CD4-positive, alpha-beta memory T cell (primary cell): ENCODE measurements at regions of chr11 and their contacts with region 1.

Region 1: DNA sequence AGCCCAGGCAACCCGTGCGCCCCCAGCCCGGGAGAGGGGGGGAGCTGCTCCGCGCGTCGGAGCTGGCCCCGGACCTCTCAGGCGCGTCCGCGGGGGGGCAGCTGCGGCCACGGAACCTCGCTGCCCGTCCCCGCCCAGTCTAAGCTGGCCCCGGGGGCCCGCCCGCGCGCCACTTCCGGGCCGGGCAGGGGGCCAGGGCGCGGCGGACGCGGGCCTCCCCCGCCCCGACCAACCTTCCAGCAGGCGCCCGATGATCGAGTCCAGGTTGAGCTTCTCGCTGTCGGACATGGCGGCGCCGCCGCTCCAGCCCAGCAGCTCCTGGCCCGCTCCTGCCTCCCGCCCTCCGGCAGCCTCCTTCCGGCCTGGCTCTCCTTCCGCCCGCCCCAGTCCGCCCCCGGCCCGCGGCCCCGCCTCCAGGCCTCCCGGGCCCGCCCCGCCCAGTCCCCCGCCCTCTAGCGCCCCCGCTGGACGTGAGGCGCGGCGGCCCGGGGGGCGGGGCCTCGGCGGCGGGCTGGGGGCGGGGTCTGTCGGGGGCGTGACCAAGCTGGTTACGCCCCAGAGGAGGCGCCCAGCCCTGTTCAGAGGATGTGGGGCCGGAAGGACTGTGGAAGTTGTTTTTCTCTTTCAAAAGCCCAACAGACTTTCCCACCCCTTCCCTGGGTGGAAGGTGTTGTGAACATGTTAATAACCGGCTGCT is at the start of gene PPP1CA:
- DNase-seq: peak; percentile 87 to 97 (median 92)
- H3K4me3 ChIP-seq: peak within 1 kb of the TSS; percentile 78 to 88
- H3K4me3 Mint-ChIP-seq: peak within 1 kb of the TSS; percentile 89 to 97 (median 92)
- H3K27ac ChIP-seq: peak within 1 kb of the TSS; percentile 81
- H3K27ac Mint-ChIP-seq: peak within 1 kb of the TSS; percentile 83 to 98 (median 89)
- H3K4me1 ChIP-seq: peaks cover 78% of the 10 kb centered on the region
- H3K4me1 Mint-ChIP-seq: peaks cover 27 to 80% (median 45%) of the 10 kb centered on the region in 4 donors
- H3K27me3 ChIP-seq: no peaks in the 10 kb centered on the region
- H3K27me3 Mint-ChIP-seq: no peaks in the 10 kb centered on the region
- total RNA-seq, gene PPP1CA: 159 to 161 TPM

Region 2: DNA sequence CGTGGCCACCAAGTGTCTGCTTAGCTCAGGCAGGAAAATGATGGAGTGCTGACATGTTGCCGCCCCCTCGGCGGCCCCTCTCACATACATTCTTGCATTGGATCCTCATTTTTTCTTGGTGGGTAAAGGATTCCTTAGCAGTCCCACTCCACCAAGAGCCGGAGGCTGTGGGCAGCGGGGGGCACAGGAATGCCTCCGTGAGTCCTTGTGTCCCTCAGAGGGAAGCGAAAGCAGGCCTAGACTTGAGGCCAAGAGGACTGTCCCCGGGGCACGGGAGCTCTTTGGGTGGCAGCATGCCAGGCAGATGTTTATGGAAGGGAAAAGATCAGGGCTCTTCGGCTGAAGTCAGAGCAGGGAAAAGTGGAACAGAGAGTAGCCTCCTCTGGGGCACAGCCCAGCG is 523.2 kb before region 1 on chr11:
- CTCF ChIA-PET with region 1: no interaction called
- POLR2A ChIA-PET with region 1: no interaction called
- intact Hi-C with region 1: no loop called
- DNase-seq: no peak
- H3K4me3 ChIP-seq: no peak overlapping the region
- H3K4me3 Mint-ChIP-seq: no peak overlapping the region
- H3K27ac ChIP-seq: no peak overlapping the region
- H3K27ac Mint-ChIP-seq: no peak overlapping the region
- H3K4me1 ChIP-seq: peaks cover 14% of the 10 kb centered on the region
- H3K4me1 Mint-ChIP-seq: peaks cover 10 to 25% (median 13%) of the 10 kb centered on the region in 4 donors
- H3K27me3 ChIP-seq: no peaks in the 10 kb centered on the region
- H3K27me3 Mint-ChIP-seq: no peaks in the 10 kb centered on the region

Region 3: GRCh38 chr11:67265633-67266423 is 135.8 kb before region 1 on chr11:
- CTCF ChIA-PET with region 1: no interaction called
- POLR2A ChIA-PET with region 1: interaction called, 30 read pairs
- intact Hi-C with region 1: no loop called
- DNase-seq: peak; percentile 61 to 85 (median 77)
- H3K4me3 ChIP-seq: peak overlapping the region in 1 of 2 donors; percentile 23
- H3K4me3 Mint-ChIP-seq: peak overlapping the region; percentile 77 to 86 (median 80)
- H3K27ac ChIP-seq: peak overlapping the region; percentile 63
- H3K27ac Mint-ChIP-seq: peak overlapping the region; percentile 79 to 94 (median 87)
- H3K4me1 ChIP-seq: peaks cover 61% of the 10 kb centered on the region
- H3K4me1 Mint-ChIP-seq: peaks cover 34 to 82% (median 50%) of the 10 kb centered on the region in 4 donors
- H3K27me3 ChIP-seq: no peaks in the 10 kb centered on the region
- H3K27me3 Mint-ChIP-seq: peaks cover 0 to 5% of the 10 kb centered on the region in 2 donors

Region 4: GRCh38 chr11:67288452-67289225 is 113.0 kb before region 1 on chr11:
- CTCF ChIA-PET with region 1: no interaction called
- POLR2A ChIA-PET with region 1: interaction called, 12 read pairs
- intact Hi-C with region 1: no loop called
- DNase-seq: peak; percentile 89 to 94 (median 91)
- H3K4me3 ChIP-seq: peak overlapping the region; percentile 58 to 62
- H3K4me3 Mint-ChIP-seq: peak overlapping the region; percentile 79 to 90 (median 86)
- H3K27ac ChIP-seq: peak overlapping the region; percentile 88
- H3K27ac Mint-ChIP-seq: peak overlapping the region; percentile 95 to 100 (median 98)
- H3K4me1 ChIP-seq: peaks cover 77% of the 10 kb centered on the region
- H3K4me1 Mint-ChIP-seq: peaks cover 32 to 81% (median 46%) of the 10 kb centered on the region in 4 donors
- H3K27me3 ChIP-seq: no peaks in the 10 kb centered on the region
- H3K27me3 Mint-ChIP-seq: no peaks in the 10 kb centered on the region

Region 5: DNA sequence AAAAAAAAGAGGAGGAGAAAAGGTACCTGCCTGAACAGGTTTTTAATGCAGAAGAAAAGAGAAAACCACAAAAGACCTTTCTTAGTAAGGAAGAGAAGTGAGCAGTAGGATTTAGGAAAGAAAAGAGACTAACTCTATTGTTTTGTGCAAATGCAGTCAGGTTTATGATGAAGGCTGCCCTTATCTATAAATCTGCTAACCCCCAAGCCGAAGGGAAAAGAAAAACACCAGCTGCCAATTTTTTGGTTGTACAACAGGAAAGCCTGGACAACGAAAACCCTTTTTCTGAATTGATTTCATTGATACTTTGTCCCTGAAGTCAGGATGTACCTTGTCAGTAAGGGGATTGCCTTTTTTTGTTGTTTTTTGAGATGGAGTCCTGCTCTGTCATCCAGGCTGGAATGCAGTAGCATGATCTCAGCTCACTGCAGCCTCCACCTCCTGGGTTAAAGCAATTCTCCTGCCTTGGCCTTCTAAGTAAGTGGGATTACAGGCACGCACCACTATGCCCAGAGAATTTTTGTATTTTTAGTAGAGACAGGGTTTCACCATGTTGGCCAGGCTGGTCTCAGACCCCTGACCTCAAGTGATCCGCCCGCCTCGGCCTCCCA is 69.5 kb before region 1 on chr11:
- CTCF ChIA-PET with region 1: no interaction called
- POLR2A ChIA-PET with region 1: no interaction called
- intact Hi-C with region 1: no loop called
- DNase-seq: no peak
- H3K4me3 ChIP-seq: no peak overlapping the region
- H3K4me3 Mint-ChIP-seq: no peak overlapping the region
- H3K27ac ChIP-seq: no peak overlapping the region
- H3K27ac Mint-ChIP-seq: no peak overlapping the region
- H3K4me1 ChIP-seq: no peaks in the 10 kb centered on the region
- H3K4me1 Mint-ChIP-seq: no peaks in the 10 kb centered on the region
- H3K27me3 ChIP-seq: no peaks in the 10 kb centered on the region
- H3K27me3 Mint-ChIP-seq: no peaks in the 10 kb centered on the region

Region 6: DNA sequence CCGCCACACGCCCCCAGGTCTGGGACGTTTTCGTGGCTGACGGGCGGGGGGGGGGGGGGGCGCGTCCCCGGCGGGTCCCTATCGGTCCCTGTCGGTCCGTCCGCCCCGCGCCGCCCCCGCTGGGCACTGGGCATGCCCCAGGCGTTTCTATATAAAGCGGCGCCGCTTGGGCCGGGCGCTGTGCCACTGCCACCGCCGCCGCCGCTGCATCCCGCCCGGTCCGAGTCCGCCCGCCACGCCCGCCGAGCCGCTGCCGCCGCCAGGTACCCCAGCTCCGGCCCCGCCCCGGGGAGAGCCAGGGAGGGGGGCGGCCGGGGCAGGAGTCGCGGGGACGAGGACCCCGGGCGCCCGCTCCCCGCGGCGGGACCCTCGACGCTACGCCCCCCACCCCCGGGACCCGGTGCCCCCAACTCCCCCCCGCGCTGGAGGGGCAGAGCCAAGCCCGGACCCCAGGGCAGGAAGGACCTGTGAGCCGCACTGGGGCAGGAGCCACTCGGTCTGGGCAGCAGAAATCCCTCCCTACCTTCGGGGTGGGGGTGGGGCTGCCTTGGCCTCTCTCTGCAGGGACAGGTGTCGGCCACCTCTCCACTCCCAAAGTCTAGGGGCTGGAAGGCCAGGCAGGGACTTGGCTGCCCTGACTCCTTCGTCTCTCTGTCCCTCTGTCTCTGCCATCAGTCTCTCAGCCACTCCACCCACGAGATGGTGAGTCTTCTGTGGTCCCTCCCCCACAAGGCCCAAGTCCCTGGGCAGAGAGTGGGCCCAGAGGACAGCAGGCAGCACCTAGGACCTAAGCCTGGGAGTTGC is 14.1 kb after region 1 on chr11 and contains the start of gene CARNS1:
- CTCF ChIA-PET with region 1: interaction called, 63 read pairs
- POLR2A ChIA-PET with region 1: interaction called, 2,262 read pairs
- intact Hi-C with region 1: loop called (anchors 1 kb)
- DNase-seq: no peak
- H3K4me3 ChIP-seq: peak within 1 kb of the TSS in 1 of 2 donors; percentile 15
- H3K4me3 Mint-ChIP-seq: peak within 1 kb of the TSS; percentile 82 to 98 (median 87)
- H3K27ac ChIP-seq: peak within 1 kb of the TSS; percentile 53
- H3K27ac Mint-ChIP-seq: peak within 1 kb of the TSS; percentile 92 to 98 (median 97)
- H3K4me1 ChIP-seq: peaks cover 91% of the 10 kb centered on the region
- H3K4me1 Mint-ChIP-seq: peaks cover 39 to 84% (median 66%) of the 10 kb centered on the region in 4 donors
- H3K27me3 ChIP-seq: no peaks in the 10 kb centered on the region
- H3K27me3 Mint-ChIP-seq: no peaks in the 10 kb centered on the region
- total RNA-seq, gene CARNS1: 2.3 to 3.3 TPM

Region 7: DNA sequence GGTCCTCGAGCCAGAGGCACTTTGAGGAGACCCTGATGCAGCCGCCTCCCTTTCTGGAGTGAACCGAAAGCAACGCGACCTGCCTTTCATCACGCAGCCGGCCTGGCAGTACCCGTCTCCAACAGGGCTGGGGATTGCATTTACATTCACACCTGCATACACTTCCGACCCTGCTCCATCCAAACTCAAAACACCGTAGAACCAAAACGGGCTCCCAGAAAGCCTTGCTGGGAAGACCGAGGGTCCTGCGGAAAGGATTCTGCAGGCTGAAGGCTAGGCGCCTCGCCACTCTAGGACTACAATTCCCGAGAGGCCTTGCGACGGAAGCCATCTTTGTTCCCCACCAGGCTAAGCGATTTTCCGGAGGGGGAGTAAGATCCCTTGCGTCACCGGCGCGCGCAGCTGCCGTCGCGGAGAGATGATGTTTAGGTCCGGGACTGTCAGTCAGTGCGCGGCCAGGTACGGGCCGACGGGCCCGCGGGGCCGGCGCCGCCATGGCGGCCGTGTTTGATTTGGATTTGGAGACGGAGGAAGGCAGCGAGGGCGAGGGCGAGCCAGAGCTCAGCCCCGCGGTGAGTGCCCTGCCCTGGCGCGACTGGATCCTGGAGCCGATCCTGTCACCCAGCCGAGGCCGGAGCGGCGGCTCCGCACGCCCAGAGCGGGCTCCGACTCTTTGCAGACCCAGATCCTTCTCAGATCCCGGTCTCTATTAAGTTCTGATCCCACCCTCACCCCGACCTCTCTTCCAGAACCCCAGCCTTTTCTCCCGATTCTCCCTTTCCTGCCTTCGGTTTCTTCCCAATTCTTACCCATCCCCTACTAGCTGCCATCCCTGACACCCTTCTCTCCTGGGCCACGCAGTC is 26.6 kb after region 1 on chr11 and contains the start of gene RPS6KB2:
- CTCF ChIA-PET with region 1: interaction called, 21 read pairs
- POLR2A ChIA-PET with region 1: interaction called, 2,262 read pairs
- intact Hi-C with region 1: loop called (anchors 1 kb)
- DNase-seq: peak; percentile 97 to 99 (median 98)
- H3K4me3 ChIP-seq: peak within 1 kb of the TSS; percentile 94 to 95
- H3K4me3 Mint-ChIP-seq: peak within 1 kb of the TSS; percentile 93 to 100 (median 98)
- H3K27ac ChIP-seq: peak within 1 kb of the TSS; percentile 90
- H3K27ac Mint-ChIP-seq: peak within 1 kb of the TSS; percentile 95 to 99 (median 97)
- H3K4me1 ChIP-seq: peaks cover 49% of the 10 kb centered on the region
- H3K4me1 Mint-ChIP-seq: peaks cover 13 to 61% (median 31%) of the 10 kb centered on the region in 4 donors
- H3K27me3 ChIP-seq: no peaks in the 10 kb centered on the region
- H3K27me3 Mint-ChIP-seq: no peaks in the 10 kb centered on the region
- total RNA-seq, gene RPS6KB2: 78.1 to 79.9 TPM

Region 8: DNA sequence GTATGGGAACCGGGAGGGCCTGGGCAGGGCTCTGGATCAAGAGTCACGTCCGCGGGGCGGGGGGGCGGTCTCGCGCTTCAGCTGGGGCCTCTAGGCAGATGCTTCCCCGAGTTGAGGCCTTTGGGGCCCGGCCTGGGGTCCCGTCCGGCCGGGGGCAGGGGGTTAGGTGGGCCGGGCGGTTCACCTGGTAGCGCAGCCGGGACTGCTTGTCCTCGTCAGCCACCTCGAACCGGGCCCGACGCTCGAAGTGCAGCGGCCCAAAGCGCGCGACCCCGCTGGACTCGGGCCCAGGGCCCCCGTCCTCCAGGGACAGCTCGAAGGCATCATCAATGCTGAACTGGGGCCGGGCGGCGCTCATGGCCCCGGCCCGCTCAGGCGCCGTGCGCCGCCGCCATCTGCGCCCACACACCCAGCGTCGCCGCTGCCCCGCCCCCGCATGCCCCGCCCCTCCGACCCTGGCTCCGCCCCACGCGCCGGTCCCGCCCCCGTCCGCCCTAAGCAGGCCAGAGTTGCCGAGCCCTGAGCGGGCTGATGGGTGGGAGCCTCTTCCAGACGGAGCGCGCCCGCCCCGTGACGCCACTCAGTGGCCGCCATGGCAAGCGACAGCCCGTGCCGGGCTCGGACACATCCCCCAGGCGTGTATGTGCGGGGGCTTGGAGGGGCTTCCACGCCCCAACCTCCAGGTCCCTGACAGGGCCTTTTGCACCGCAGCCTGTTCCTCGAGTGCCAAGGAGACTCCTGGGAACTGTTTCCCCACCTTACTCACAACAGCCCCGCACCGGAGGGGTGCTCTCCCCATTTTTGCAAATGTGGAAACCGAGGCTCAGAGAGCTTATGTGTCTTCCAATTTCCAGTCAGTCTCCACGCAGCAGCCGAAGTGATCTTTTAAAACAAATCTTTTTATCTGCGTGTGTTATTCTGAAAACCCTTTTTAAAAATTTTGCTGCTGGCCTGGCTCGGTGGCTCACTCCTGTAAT is 67.5 kb after region 1 on chr11 and contains the start of gene TMEM134:
- CTCF ChIA-PET with region 1: interaction called, 20 read pairs
- POLR2A ChIA-PET with region 1: interaction called, 260 read pairs
- intact Hi-C with region 1: loop called (anchors 1 kb)
- DNase-seq: peak; percentile 85 to 88 (median 88)
- H3K4me3 ChIP-seq: peak within 1 kb of the TSS; percentile 78 to 79
- H3K4me3 Mint-ChIP-seq: peak within 1 kb of the TSS; percentile 83 to 92 (median 90)
- H3K27ac ChIP-seq: peak within 1 kb of the TSS; percentile 81
- H3K27ac Mint-ChIP-seq: peak within 1 kb of the TSS; percentile 84 to 96 (median 91)
- H3K4me1 ChIP-seq: peaks cover 46% of the 10 kb centered on the region
- H3K4me1 Mint-ChIP-seq: peaks cover 16 to 36% (median 27%) of the 10 kb centered on the region in 4 donors
- H3K27me3 ChIP-seq: no peaks in the 10 kb centered on the region
- H3K27me3 Mint-ChIP-seq: no peaks in the 10 kb centered on the region
- total RNA-seq, gene TMEM134: 90.1 to 99.1 TPM

Region 9: GRCh38 chr11:67507864-67508485 is 106.3 kb after region 1 on chr11 and contains the start of gene CDK2AP2:
- CTCF ChIA-PET with region 1: interaction called, 9 read pairs
- POLR2A ChIA-PET with region 1: interaction called, 78 read pairs
- intact Hi-C with region 1: loop called (anchors 1 kb)
- DNase-seq: peak; percentile 96 to 98 (median 97)
- H3K4me3 ChIP-seq: peak within 1 kb of the TSS; percentile 77 to 79
- H3K4me3 Mint-ChIP-seq: peak within 1 kb of the TSS; percentile 88 to 98 (median 90)
- H3K27ac ChIP-seq: peak within 1 kb of the TSS; percentile 93
- H3K27ac Mint-ChIP-seq: peak within 1 kb of the TSS; percentile 97 to 99 (median 99)
- H3K4me1 ChIP-seq: peaks cover 44% of the 10 kb centered on the region
- H3K4me1 Mint-ChIP-seq: peaks cover 20 to 55% (median 33%) of the 10 kb centered on the region in 4 donors
- H3K27me3 ChIP-seq: no peaks in the 10 kb centered on the region
- H3K27me3 Mint-ChIP-seq: peaks cover 3% of the 10 kb centered on the region in 2 donors
- total RNA-seq, gene CDK2AP2: 85.8 to 86.0 TPM